ENCODE measurements at regions of chr1 and their contacts with region 1.

Region 1: DNA sequence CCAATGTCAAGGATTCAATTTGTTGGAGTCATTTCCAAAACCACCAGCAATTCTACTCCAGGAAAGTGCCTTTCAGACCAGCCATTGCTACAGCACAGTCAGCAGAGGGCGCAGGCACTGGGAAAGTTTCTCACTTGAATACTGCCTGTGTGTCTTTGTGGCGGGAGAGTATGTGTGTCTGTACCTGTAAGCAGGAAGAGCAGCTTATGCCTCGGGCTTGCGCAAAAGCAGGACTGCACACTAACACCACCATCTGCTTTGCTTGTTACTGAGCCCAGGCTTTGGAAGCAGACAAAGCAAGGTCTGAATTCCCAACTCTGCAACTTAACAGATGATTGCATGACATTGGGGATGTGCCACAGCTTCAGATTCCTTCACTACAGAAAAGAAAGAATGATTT is 7.0 kb upstream of the CTSE start:
- DNase-seq: peak; percentile 85
- ATAC-seq: peak; percentile 84
- H3K4me3 ChIP-seq: peak overlapping the region in 2 of 5 experiments; percentile 3 to 38
- H3K4me3 Mint-ChIP-seq: peak overlapping the region; percentile 73
- H3K27ac ChIP-seq: no peak overlapping the region
- H3K27ac Mint-ChIP-seq: peak overlapping the region; percentile 46
- H3K4me1 ChIP-seq: peaks cover 38 to 42% of the 10 kb centered on the region in 2 donors
- H3K4me1 Mint-ChIP-seq: peaks cover 46% of the 10 kb centered on the region
- H3K27me3 ChIP-seq: no peaks in the 10 kb centered on the region
- H3K27me3 Mint-ChIP-seq: no peaks in the 10 kb centered on the region
- CTCF ChIP-seq: peak; percentile 92

Region 2: GRCh38 chr1:205977402-205978014 is 53.2 kb before region 1 on chr1:
- CTCF ChIA-PET with region 1: interaction called, 75 read pairs
- POLR2A ChIA-PET with region 1: no interaction called
- intact Hi-C with region 1: no loop called
- DNase-seq: peak; percentile 83
- ATAC-seq: peak; percentile 84
- H3K4me3 ChIP-seq: no peak overlapping the region
- H3K4me3 Mint-ChIP-seq: no peak overlapping the region
- H3K27ac ChIP-seq: no peak overlapping the region
- H3K27ac Mint-ChIP-seq: no peak overlapping the region
- H3K4me1 ChIP-seq: no peaks in the 10 kb centered on the region
- H3K4me1 Mint-ChIP-seq: no peaks in the 10 kb centered on the region
- H3K27me3 ChIP-seq: no peaks in the 10 kb centered on the region
- H3K27me3 Mint-ChIP-seq: peaks cover 2% of the 10 kb centered on the region
- CTCF ChIP-seq: peak; percentile 96

Region 3: GRCh38 chr1:206041640-206042039 is 10.9 kb after region 1 on chr1:
- CTCF ChIA-PET with region 1: interaction called, 122 read pairs
- POLR2A ChIA-PET with region 1: interaction called, 7 read pairs
- intact Hi-C with region 1: no loop called
- DNase-seq: peak; percentile 81
- ATAC-seq: peak; percentile 89
- H3K4me3 ChIP-seq: peak overlapping the region in 2 of 5 experiments; percentile 3 to 4
- H3K4me3 Mint-ChIP-seq: peak overlapping the region; percentile 78
- H3K27ac ChIP-seq: peak overlapping the region; percentile 72 to 82
- H3K27ac Mint-ChIP-seq: peak overlapping the region; percentile 95
- H3K4me1 ChIP-seq: peaks cover 75 to 77% of the 10 kb centered on the region in 2 donors
- H3K4me1 Mint-ChIP-seq: peaks cover 71% of the 10 kb centered on the region
- H3K27me3 ChIP-seq: no peaks in the 10 kb centered on the region
- H3K27me3 Mint-ChIP-seq: no peaks in the 10 kb centered on the region
- CTCF ChIP-seq: no peak

Region 4: GRCh38 chr1:206066479-206067171 is 35.9 kb after region 1 on chr1:
- CTCF ChIA-PET with region 1: interaction called, 36 read pairs
- POLR2A ChIA-PET with region 1: interaction called, 6 read pairs
- intact Hi-C with region 1: loop called (anchors 1 kb)
- DNase-seq: peak; percentile 72
- ATAC-seq: peak; percentile 78
- H3K4me3 ChIP-seq: no peak overlapping the region
- H3K4me3 Mint-ChIP-seq: peak overlapping the region; percentile 75
- H3K27ac ChIP-seq: peak overlapping the region; percentile 63 to 75
- H3K27ac Mint-ChIP-seq: peak overlapping the region; percentile 88
- H3K4me1 ChIP-seq: peaks cover 35 to 43% of the 10 kb centered on the region in 2 donors
- H3K4me1 Mint-ChIP-seq: peaks cover 49% of the 10 kb centered on the region
- H3K27me3 ChIP-seq: no peaks in the 10 kb centered on the region
- H3K27me3 Mint-ChIP-seq: no peaks in the 10 kb centered on the region
- CTCF ChIP-seq: no peak

Region 5: GRCh38 chr1:206106328-206107167 is 75.8 kb after region 1 on chr1:
- CTCF ChIA-PET with region 1: interaction called, 682 read pairs
- POLR2A ChIA-PET with region 1: interaction called, 15 read pairs
- intact Hi-C with region 1: no loop called
- DNase-seq: peak; percentile 88
- ATAC-seq: peak; percentile 92
- H3K4me3 ChIP-seq: no peak overlapping the region
- H3K4me3 Mint-ChIP-seq: no peak overlapping the region
- H3K27ac ChIP-seq: no peak overlapping the region
- H3K27ac Mint-ChIP-seq: peak overlapping the region; percentile 60
- H3K4me1 ChIP-seq: peaks cover 12% of the 10 kb centered on the region in 2 donors
- H3K4me1 Mint-ChIP-seq: peaks cover 28% of the 10 kb centered on the region
- H3K27me3 ChIP-seq: no peaks in the 10 kb centered on the region
- H3K27me3 Mint-ChIP-seq: no peaks in the 10 kb centered on the region
- CTCF ChIP-seq: peak; percentile 94

Measured in B cell (primary cell).